PC-3 (cell line): ENCODE measurements at regions of chr11 and their contacts with region 1.

Region 1: DNA sequence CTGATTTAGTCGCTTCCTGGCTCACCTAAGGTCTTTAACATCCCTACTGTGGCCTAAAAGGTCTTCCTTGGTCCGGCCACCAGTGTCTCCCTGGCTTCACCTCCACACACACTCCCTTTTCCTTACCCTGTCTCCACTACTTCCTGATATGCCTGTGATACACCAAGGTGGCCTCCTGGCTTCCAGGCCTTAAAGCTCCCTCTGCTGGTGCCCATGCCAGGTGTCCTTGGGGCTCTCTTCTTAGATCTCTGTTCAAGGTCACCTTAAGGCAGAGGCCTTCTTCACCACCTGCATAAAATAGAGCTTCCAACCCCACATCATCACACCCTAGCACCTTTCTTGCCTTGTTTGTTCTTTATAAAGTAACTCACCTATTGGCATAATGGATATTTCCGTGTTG is 787.7 kb downstream of the NTM start:
- DNase-seq: peak; percentile 50
- ATAC-seq: peak; percentile 80
- H3K4me3 ChIP-seq: no peak overlapping the region
- H3K27ac ChIP-seq: no peak overlapping the region
- H3K4me1 ChIP-seq: no peaks in the 10 kb centered on the region
- H3K27me3 ChIP-seq: no peaks in the 10 kb centered on the region
- CTCF ChIP-seq: peak; percentile 70

Region 2: GRCh38 chr11:130689222-130689908 is 1468.7 kb before region 1 on chr11:
- CTCF ChIA-PET with region 1: no interaction called
- POLR2A ChIA-PET with region 1: interaction called, 12 read pairs
- intact Hi-C with region 1: no loop called
- DNase-seq: peak; percentile 37
- ATAC-seq: peak; percentile 78
- H3K4me3 ChIP-seq: no peak overlapping the region
- H3K27ac ChIP-seq: peak overlapping the region; percentile 8
- H3K4me1 ChIP-seq: peaks cover 9% of the 10 kb centered on the region
- H3K27me3 ChIP-seq: no peaks in the 10 kb centered on the region
- CTCF ChIP-seq: no peak

Region 3: GRCh38 chr11:132114185-132114584 is 43.9 kb before region 1 on chr11:
- CTCF ChIA-PET with region 1: no interaction called
- POLR2A ChIA-PET with region 1: no interaction called
- intact Hi-C with region 1: loop called (anchors 5 kb)
- DNase-seq: peak; percentile 55
- ATAC-seq: peak; percentile 37; the same call in 1 of the 2 replicates
- H3K4me3 ChIP-seq: no peak overlapping the region
- H3K27ac ChIP-seq: no peak overlapping the region
- H3K4me1 ChIP-seq: peaks cover 14% of the 10 kb centered on the region
- H3K27me3 ChIP-seq: no peaks in the 10 kb centered on the region
- CTCF ChIP-seq: peak; percentile 57

Region 4: DNA sequence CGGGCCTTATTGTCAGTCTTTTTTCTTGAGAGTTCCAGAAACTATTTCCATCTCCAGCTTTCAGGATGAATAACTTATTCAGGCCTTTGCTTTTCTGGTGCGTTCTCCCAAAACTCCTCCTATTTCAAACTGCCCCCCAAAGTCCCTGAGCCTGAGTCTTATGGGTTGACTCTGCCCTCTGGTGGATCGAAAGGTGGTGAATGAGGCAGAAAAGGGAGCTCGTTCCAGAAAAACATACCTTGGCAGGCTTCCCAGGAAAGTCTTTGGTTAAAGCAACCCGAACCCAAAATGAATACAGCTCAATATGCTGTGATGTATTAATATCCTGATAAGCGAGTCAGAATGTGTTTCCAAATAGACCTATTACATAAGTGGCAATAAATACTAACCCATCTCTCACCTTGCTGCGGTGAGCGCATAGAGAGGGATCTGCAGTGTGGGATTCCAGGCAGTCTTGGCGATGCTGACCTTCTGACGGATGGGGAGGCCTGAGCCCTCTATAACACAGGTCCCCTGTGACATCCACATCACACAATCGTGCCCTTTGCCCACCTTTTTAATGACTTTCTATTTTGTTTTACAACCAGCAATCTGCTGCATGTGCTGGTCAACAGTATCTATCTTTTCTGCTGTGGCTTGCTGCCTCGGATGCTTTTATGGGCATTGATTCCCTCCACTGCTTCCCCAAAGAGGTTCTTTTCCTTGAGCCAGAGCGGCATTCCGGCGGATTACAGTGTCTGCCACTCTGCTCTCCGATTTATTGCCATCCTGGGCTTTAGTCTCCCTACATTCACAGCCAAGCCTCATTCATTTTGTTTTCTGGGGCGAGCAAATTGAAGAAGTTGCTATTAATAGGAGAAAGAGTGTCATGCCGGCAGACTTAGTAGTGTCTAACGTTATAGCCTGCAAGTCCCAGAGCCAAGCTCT is 30.9 kb before region 1 on chr11:
- CTCF ChIA-PET with region 1: no interaction called
- POLR2A ChIA-PET with region 1: no interaction called
- intact Hi-C with region 1: loop called (anchors 1 kb)
- DNase-seq: peak; percentile 70
- ATAC-seq: peak; percentile 58
- H3K4me3 ChIP-seq: 0 out of 2 replicates have a peak overlapping the region, but pooled peaks have one; percentile 21
- H3K27ac ChIP-seq: no peak overlapping the region
- H3K4me1 ChIP-seq: peaks cover 8% of the 10 kb centered on the region
- H3K27me3 ChIP-seq: no peaks in the 10 kb centered on the region
- CTCF ChIP-seq: peak; percentile 78

Region 5: DNA sequence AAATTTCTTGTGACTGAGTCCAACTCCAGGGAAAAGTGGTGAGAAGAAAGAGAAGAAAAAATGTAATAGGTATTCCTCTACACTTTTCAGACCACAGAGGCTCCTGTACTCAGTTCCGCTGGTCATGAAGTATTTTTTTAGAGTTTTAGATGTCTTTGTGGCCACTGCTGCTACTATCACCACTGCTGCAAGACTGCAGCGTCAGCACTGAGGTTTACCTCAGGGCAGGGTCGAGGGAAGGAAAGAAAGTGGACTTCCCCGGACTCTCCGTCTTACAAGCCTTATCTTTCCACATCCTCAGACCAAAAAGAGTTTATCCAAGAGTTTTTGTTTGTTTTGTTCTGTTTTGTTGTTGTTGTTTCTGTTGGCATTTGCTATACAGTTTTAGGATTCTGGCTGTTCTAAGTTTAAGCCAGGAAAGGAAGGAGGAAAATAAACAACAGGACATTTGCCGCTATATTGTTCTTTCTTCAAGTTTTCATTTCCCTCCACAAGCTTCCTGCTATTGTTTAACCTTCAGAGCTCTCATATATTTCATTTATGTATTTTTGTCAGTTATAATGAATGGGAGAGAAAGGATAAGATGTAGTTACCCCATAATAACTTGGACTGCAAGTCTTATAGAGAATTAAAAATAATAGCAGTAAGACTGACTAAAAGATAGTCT is 131.6 kb after region 1 on chr11:
- CTCF ChIA-PET with region 1: no interaction called
- POLR2A ChIA-PET with region 1: no interaction called
- intact Hi-C with region 1: no loop called
- DNase-seq: no peak
- ATAC-seq: no peak
- H3K4me3 ChIP-seq: no peak overlapping the region
- H3K27ac ChIP-seq: no peak overlapping the region
- H3K4me1 ChIP-seq: no peaks in the 10 kb centered on the region
- H3K27me3 ChIP-seq: peaks cover 29% of the 10 kb centered on the region; the same call in 1 of the 2 replicates
- CTCF ChIP-seq: no peak